Naive thymus-derived CD4-positive, alpha-beta T cell (primary cell): ENCODE measurements at regions of chr15 and their contacts with region 1.

Region 1: GRCh38 chr15:58987489-58988005 is at the start of gene RNF111:
- DNase-seq: peak; percentile 66 to 94 (median 90)
- ATAC-seq: peak; percentile 98
- H3K4me3 ChIP-seq: peak within 1 kb of the TSS; percentile 83
- H3K4me3 Mint-ChIP-seq: peak within 1 kb of the TSS; percentile 89 to 100 (median 96)
- H3K27ac ChIP-seq: peak within 1 kb of the TSS; percentile 91
- H3K27ac Mint-ChIP-seq: peak within 1 kb of the TSS; percentile 87 to 96 (median 94)
- H3K4me1 ChIP-seq: peaks cover 17 to 25% of the 10 kb centered on the region in 2 donors
- H3K4me1 Mint-ChIP-seq: peaks cover 33 to 56% (median 53%) of the 10 kb centered on the region in 7 donors
- H3K27me3 ChIP-seq: no peaks in the 10 kb centered on the region
- H3K27me3 Mint-ChIP-seq: peaks cover 0 to 13% (median 0%) of the 10 kb centered on the region in 5 donors
- total RNA-seq, gene RNF111: 50.8 to 61.1 (median 57.9) TPM

Region 2: GRCh38 chr15:58731756-58732535 is 255.6 kb before region 1 on chr15:
- CTCF ChIA-PET with region 1: no interaction called
- POLR2A ChIA-PET with region 1: no interaction called
- intact Hi-C with region 1: no loop called
- DNase-seq: no peak
- ATAC-seq: peak; percentile 62
- H3K4me3 ChIP-seq: no peak overlapping the region
- H3K4me3 Mint-ChIP-seq: peak overlapping the region in 5 of 10 donors; percentile 13 to 45 (median 26)
- H3K27ac ChIP-seq: no peak overlapping the region
- H3K27ac Mint-ChIP-seq: peak overlapping the region in 5 of 9 donors; percentile 25 to 77 (median 58)
- H3K4me1 ChIP-seq: peaks cover 5 to 11% of the 10 kb centered on the region in 2 donors
- H3K4me1 Mint-ChIP-seq: peaks cover 48 to 86% (median 79%) of the 10 kb centered on the region in 7 donors
- H3K27me3 ChIP-seq: no peaks in the 10 kb centered on the region
- H3K27me3 Mint-ChIP-seq: no peaks in the 10 kb centered on the region

Region 3: DNA sequence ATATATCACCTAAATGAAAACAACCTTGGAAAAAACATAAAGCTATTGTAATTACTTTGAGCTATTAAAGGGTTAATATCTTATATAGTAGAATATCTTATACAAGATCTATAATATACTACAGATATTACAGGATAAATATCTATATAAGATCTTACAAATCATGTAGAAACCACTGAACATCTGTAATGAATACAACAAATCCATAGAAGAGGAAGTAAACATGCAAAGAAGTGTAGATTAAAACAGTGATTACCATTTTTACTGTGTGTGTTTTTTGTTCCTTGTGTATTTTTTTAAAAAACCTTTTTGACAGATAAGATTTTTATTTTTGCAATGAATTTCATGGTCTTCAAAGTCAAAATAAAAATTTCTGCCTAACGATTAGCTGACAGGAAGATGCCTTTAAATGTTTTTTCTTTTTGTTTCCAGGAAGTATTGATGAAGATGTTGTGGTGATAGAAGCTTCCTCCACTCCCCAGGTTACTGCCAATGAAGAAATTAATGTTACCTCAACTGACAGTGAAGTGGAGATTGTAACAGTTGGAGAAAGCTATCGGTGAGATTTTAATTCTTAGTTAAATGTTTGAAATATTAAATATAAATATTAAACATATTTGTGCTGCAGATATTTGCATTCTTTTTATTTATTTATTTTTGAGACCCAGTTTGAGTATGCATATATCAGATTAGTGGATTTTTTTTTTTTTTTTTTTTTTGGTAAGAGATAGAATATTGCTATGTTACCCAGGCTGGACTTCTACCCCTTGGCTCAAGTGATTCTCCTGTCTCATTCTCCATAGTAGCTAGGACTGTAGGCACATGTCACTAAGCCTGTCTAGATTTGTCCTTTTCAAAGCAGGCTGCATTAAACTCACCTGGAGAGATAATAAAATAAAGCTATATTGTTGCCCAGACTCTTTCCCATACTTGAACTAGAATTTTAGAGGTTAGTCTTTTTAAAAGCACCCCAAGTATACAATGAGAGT is 64.6 kb after region 1 on chr15:
- CTCF ChIA-PET with region 1: no interaction called
- POLR2A ChIA-PET with region 1: no interaction called
- intact Hi-C with region 1: loop called in 1 of 2 experiments (anchors 2 kb)
- DNase-seq: peak in 1 of 9 donors; percentile 4
- ATAC-seq: no peak
- H3K4me3 ChIP-seq: no peak overlapping the region
- H3K4me3 Mint-ChIP-seq: peak overlapping the region in 6 of 10 donors; percentile 4 to 64 (median 38)
- H3K27ac ChIP-seq: no peak overlapping the region
- H3K27ac Mint-ChIP-seq: peak overlapping the region in 4 of 9 donors; percentile 13 to 87 (median 58)
- H3K4me1 ChIP-seq: peaks cover 3 to 8% of the 10 kb centered on the region in 2 donors
- H3K4me1 Mint-ChIP-seq: peaks cover 17 to 38% (median 27%) of the 10 kb centered on the region in 7 donors
- H3K27me3 ChIP-seq: no peaks in the 10 kb centered on the region
- H3K27me3 Mint-ChIP-seq: no peaks in the 10 kb centered on the region

Region 4: GRCh38 chr15:59372352-59373211 is 385.0 kb after region 1 on chr15 and contains the start of gene MYO1E:
- CTCF ChIA-PET with region 1: no interaction called
- POLR2A ChIA-PET with region 1: no interaction called
- intact Hi-C with region 1: loop called in 1 of 2 experiments (anchors 5 kb)
- DNase-seq: peak in 3 of 9 donors; percentile 3 to 49 (median 23)
- ATAC-seq: peak; percentile 83
- H3K4me3 ChIP-seq: peak within 1 kb of the TSS; percentile 56
- H3K4me3 Mint-ChIP-seq: peak within 1 kb of the TSS; percentile 80 to 97 (median 86)
- H3K27ac ChIP-seq: no peak within 1 kb of the TSS
- H3K27ac Mint-ChIP-seq: peak within 1 kb of the TSS in 1 of 9 donors; percentile 81
- H3K4me1 ChIP-seq: peaks cover 0 to 8% of the 10 kb centered on the region in 2 donors
- H3K4me1 Mint-ChIP-seq: peaks cover 7 to 38% (median 20%) of the 10 kb centered on the region in 7 donors
- H3K27me3 ChIP-seq: peaks cover 7 to 10% of the 10 kb centered on the region in 2 donors
- H3K27me3 Mint-ChIP-seq: peaks cover 49 to 67% (median 57%) of the 10 kb centered on the region in 5 donors
- total RNA-seq, gene MYO1E: 2.3 to 67.1 (median 3.7) TPM

Region 5: DNA sequence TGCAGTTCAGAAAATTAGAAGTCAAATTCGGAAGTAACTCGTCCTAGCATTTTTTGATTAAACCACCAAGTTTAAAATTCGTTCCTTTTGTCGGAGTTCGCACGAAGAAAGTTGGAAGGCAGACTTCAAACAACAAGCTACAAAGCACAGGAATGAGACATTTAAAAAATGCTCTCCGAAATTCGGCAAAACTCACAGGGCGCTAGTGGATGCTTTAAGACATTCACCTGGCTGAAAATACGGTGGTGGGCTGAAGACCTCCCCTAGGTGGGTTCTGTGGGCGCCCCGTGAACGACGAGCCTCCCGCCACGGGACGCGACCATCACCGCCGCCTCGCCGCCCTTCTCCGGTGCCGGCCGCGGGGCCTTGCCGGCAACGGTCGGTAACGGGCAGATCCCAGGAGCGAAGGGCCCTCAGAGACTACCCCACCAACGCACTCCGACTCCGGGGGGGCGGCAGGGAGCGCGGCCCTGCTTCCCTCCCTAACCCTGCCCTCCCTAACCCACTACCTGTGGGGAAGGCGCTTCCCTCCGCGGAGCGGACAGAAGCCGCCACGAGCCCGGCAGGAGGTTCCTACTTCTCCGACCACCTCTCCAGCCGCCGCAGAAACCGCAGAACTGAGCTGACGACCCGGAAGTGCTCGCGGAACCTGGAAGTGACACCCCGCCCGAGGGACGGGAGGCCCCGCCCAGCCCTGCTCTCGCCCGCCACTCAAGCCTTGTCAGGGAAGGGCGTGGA is 669.5 kb after region 1 on chr15 and contains the start of gene GTF2A2:
- CTCF ChIA-PET with region 1: no interaction called
- POLR2A ChIA-PET with region 1: no interaction called
- intact Hi-C with region 1: loop called (anchors 5 to 10 kb)
- DNase-seq: peak; percentile 81 to 95 (median 89)
- ATAC-seq: peak; percentile 99
- H3K4me3 ChIP-seq: peak within 1 kb of the TSS; percentile 77
- H3K4me3 Mint-ChIP-seq: peak within 1 kb of the TSS in 7 of 10 donors; percentile 18 to 52 (median 26)
- H3K27ac ChIP-seq: peak within 1 kb of the TSS; percentile 89
- H3K27ac Mint-ChIP-seq: peak within 1 kb of the TSS in 4 of 9 donors; percentile 76 to 88 (median 78)
- H3K4me1 ChIP-seq: peaks cover 18% of the 10 kb centered on the region in 2 donors
- H3K4me1 Mint-ChIP-seq: peaks cover 4 to 17% (median 11%) of the 10 kb centered on the region in 7 donors
- H3K27me3 ChIP-seq: no peaks in the 10 kb centered on the region
- H3K27me3 Mint-ChIP-seq: no peaks in the 10 kb centered on the region
- total RNA-seq, gene GTF2A2: 46.6 to 124 (median 50.1) TPM